Caco-2 (cell line): ENCODE measurements at regions of chr16 and their contacts with region 1.

Region 1: DNA sequence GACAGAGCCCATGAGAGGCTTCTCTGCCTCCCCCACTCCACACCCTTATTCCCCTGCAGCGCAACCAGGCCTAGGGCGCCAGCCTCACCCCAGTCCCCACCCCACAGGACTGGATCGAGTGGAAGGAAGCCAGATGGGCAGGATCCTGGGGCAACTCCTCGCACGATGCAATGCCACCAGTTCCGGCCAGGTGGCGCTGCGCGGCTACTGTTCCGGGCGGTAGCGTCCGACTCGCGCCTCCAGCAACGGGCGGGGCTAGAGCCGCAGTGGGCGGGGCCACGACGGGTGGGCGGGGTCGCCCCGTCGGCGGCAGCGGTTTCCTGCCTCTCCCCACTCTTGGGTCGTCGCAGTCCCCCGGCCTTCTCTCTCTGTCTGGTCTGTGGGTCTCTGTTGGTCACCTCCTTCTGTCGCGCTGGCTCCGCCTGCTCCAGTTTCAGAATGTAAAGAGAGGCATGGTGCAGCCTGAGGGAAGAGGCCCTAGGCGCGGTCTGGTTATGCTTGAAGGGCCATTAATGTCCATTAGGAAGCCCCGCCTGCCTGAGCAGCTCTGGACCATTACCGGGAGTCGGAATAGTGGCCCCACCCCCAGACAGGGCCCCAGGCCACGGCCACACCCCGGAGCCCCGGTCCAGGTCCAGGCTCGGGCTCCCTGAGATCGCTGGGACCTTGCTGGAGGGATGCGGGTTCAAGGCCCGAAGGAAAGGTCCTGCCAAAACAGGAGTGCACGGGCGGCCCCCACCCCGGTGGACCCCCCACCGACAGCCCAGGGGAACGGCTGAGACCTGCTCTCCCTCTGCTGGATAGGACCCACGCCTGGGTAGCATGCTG is 3.4 kb upstream of the NHERF2 start:
- DNase-seq: peak; percentile 85 to 93
- H3K4me3 ChIP-seq: peak overlapping the region; percentile 25
- H3K4me3 Mint-ChIP-seq: peak overlapping the region; percentile 74
- H3K27ac Mint-ChIP-seq: no peak overlapping the region
- H3K4me1 ChIP-seq: peaks cover 17% of the 10 kb centered on the region
- H3K4me1 Mint-ChIP-seq: peaks cover 18% of the 10 kb centered on the region
- H3K27me3 ChIP-seq: no peaks in the 10 kb centered on the region
- H3K27me3 Mint-ChIP-seq: no peaks in the 10 kb centered on the region
- CTCF ChIP-seq: peak; percentile 90 to 95

Region 2: DNA sequence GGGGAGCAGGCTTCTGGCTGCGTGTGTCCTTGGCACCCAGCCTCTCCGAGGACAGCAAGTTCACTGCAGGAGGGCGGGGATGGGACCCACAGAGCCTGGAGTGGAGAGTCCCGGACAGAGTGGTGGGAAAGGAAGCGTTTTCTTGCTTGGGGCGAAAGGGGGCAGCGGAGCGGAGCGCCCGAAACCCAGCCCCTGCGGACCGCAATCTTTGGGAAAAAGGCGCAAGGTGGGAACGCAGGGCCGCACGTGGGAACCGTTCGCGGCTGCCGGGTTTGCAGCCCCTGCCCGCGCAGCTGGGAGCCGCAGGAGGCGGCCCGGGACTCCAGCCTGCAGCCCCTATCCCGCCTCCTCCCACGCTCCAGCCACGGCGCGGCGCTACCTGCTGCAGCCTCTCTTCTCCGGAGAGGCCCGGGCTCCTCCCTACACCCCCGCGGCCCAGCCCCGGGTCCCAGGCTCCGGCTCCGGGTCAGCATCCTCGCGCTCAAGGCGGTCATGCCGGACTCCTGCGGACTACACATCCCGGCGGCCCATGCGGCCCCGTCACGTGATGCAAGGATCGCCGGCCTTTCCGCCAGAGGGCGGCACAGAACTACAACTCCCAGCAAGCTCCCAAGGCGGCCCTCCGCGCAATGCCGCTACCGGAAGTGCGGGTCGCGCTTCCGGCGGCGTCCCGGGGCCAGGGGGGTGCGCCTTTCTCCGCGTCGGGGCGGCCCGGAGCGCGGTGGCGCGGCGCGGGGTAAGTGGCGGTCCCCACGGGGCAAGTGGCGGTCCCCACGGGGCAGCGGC is 24.2 kb after region 1 on chr16 and contains the starts of genes NTHL1 and TSC2:
- CTCF ChIA-PET with region 1: interaction called, 14 read pairs
- POLR2A ChIA-PET with region 1: interaction called, 4 read pairs
- intact Hi-C with region 1: loop called (anchors 1 kb)
- DNase-seq: peak; percentile 94 to 96
- H3K4me3 ChIP-seq: peak within 1 kb of the TSS; percentile 90
- H3K4me3 Mint-ChIP-seq: peak within 1 kb of the TSS; percentile 89
- H3K27ac Mint-ChIP-seq: peak within 1 kb of the TSS; percentile 23
- H3K4me1 ChIP-seq: no peaks in the 10 kb centered on the region
- H3K4me1 Mint-ChIP-seq: peaks cover 6% of the 10 kb centered on the region
- H3K27me3 ChIP-seq: no peaks in the 10 kb centered on the region
- H3K27me3 Mint-ChIP-seq: no peaks in the 10 kb centered on the region
- CTCF ChIP-seq: peak; percentile 39 to 56
- total RNA-seq, gene NTHL1: 34.3 and 38.6 TPM in 2 replicates
- total RNA-seq, gene TSC2: 109 and 112 TPM in 2 replicates

Region 3: DNA sequence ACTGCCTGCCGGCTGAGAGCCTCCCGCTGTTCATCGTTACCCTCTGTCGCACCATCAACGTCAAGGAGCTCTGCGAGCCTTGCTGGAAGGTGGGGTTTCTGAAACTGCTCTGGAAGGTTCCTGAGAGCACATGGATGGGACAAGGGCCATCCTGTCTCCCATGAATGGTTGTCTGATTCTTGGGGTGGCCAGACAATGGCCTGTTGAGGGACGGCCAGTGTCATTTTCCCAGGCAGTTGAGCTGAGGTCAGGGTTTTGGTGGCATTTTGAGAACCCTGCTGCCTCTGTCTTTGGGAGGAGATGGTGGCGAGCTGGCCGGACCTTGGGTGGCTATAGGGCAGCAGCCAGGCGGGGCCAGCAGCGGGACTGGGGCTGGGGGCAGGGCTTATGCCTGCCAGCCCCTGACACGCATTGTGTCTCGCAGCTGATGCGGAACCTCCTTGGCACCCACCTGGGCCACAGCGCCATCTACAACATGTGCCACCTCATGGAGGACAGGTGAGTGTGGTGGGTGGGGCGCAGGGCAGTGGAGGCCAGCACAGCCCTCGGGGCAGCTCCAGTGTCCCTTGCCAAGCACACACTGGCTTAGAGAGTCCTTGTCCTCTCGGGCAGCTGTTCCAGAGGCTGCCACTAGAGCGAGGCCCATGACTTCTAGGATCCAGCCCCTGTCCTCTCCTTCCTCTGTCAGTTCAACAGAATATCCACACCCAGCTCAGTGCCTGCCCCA is 33.5 kb after region 1 on chr16:
- CTCF ChIA-PET with region 1: interaction called, 13 read pairs
- POLR2A ChIA-PET with region 1: no interaction called
- intact Hi-C with region 1: loop called (anchors 1 kb)
- DNase-seq: peak in 1 of 2 experiments; percentile 33
- H3K4me3 ChIP-seq: no peak overlapping the region
- H3K4me3 Mint-ChIP-seq: no peak overlapping the region
- H3K27ac Mint-ChIP-seq: no peak overlapping the region
- H3K4me1 ChIP-seq: no peaks in the 10 kb centered on the region
- H3K4me1 Mint-ChIP-seq: no peaks in the 10 kb centered on the region
- H3K27me3 ChIP-seq: no peaks in the 10 kb centered on the region
- H3K27me3 Mint-ChIP-seq: no peaks in the 10 kb centered on the region
- CTCF ChIP-seq: peak; percentile 21 to 29